A673 (cell line): ENCODE measurements at regions of chr4 and their contacts with region 1.

Region 1: DNA sequence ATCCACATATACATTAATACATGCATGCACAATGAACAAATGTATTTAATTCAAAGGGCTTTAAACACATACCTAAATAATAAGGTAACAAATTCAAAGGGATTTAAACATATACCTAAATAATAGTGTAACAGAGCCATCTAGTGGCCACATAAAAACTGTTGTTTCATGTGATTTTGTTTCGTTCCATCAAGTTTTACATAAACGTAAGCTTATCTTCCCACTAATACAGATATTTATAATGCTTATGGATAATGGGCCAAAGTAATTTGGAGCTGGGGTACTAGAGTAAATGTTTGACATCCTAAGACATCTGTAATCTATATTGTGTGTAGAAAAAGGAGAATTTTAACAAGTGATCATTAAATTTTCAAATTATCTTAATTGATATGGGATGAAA is 82.3 kb downstream of the PRSS12 start:
- DNase-seq: peak; percentile 58
- H3K4me3 ChIP-seq: no peak overlapping the region
- H3K27ac ChIP-seq: no peak overlapping the region
- H3K4me1 ChIP-seq: no peaks in the 10 kb centered on the region
- H3K27me3 ChIP-seq: no peaks in the 10 kb centered on the region
- CTCF ChIP-seq: peak; percentile 73

Region 2: DNA sequence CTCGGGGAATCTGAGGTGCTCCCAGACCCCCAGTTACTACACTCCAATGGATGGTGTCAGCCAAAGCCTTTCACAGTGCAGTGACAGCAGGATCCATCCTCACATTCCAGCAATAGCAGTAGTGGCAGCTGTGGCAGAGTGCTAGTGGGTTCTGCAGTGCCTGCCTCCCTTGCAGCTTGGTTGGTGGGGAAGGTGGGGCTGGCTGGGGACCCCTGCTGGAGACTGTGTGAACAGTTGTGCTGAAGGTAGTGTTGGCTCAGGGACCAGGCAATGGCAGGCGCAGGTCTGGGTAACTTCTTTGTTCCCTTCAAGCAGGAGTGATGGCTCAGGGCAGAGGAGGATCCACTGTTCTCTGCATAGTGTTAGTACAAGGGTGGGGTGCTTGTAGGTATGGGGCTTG is 841.4 kb before region 1 on chr4:
- CTCF ChIA-PET with region 1: no interaction called
- POLR2A ChIA-PET with region 1: no interaction called
- intact Hi-C with region 1: no loop called
- DNase-seq: no peak
- H3K4me3 ChIP-seq: no peak overlapping the region
- H3K27ac ChIP-seq: no peak overlapping the region
- H3K4me1 ChIP-seq: no peaks in the 10 kb centered on the region
- H3K27me3 ChIP-seq: no peaks in the 10 kb centered on the region
- CTCF ChIP-seq: 0 out of 2 replicates have a peak, but pooled peaks have one; percentile 14

Region 3: GRCh38 chr4:118076958-118077766 is 193.3 kb before region 1 on chr4:
- CTCF ChIA-PET with region 1: no interaction called
- POLR2A ChIA-PET with region 1: no interaction called
- intact Hi-C with region 1: loop called (anchors 5 kb)
- DNase-seq: peak; percentile 74
- H3K4me3 ChIP-seq: no peak overlapping the region
- H3K27ac ChIP-seq: no peak overlapping the region
- H3K4me1 ChIP-seq: peaks cover 10% of the 10 kb centered on the region
- H3K27me3 ChIP-seq: no peaks in the 10 kb centered on the region
- CTCF ChIP-seq: peak; percentile 64